ENCODE measurements at regions of chr11 and their contacts with region 1.

Region 1: GRCh38 chr11:69101115-69101791 is 52.5 kb downstream of the TPCN2 start:
- DNase-seq: peak; percentile 90
- CTCF ChIP-seq: peak; percentile 98

Region 2: DNA sequence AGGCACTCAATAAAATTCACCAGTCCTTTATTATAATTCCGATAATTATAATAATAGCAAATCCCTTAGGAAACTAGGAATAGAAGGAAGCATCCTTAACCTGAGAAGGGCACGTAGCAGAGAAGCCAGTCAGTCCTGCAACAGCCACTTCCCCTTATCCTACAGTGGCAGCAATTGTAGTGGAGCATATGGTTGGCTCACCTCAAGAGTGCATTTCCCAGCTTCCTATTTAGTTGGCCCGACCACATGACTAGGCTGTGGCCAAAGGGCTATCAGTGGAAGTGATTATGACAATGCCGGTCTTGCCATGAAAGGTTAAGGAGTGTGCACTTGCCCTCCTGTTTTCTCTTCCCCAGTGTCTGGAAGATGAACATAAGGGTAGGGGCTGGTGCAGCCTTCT is 377.0 kb before region 1 on chr11:
- in situ Hi-C with region 1: no loop called
- DNase-seq: no peak
- CTCF ChIP-seq: no peak

Region 3: GRCh38 chr11:69217276-69218105 is 116.2 kb after region 1 on chr11:
- in situ Hi-C with region 1: no loop called
- DNase-seq: no peak
- CTCF ChIP-seq: no peak

Region 4: GRCh38 chr11:69296890-69297786 is 195.9 kb after region 1 on chr11:
- in situ Hi-C with region 1: loop called (anchors 25 kb)
- DNase-seq: peak; percentile 89
- CTCF ChIP-seq: no peak

Region 5: DNA sequence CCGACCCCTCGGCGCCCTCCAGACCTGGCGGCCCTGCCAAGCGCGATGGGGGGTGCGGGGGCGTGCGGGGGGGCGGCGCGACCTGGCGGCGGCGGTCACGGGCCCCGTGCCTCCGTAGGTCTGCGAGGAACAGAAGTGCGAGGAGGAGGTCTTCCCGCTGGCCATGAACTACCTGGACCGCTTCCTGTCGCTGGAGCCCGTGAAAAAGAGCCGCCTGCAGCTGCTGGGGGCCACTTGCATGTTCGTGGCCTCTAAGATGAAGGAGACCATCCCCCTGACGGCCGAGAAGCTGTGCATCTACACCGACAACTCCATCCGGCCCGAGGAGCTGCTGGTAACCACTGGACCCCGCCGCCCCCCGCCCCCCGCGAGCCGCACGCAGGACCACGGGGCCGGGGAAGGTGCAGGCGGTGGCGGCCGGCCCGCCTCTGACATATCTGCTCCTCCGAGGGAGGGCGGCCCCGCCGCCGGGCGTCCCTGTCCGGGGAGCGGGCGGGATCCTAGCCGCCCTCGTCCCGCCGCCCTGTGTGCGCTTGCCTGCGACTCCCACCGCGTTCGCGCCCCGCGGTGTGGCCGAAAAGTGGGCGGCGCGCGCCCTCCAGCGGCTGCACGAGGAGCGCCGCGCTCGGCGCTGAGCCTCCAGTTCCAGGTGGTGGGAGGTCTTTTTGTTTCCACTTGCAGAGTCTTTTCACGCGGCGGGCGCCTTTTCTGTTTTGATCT is 541.8 kb after region 1 on chr11:
- in situ Hi-C with region 1: loop called (anchors 10 kb)
- DNase-seq: peak; percentile 90
- CTCF ChIP-seq: peak; percentile 97

Measured in GM13976 (cell line).